ENCODE measurements at regions of chr1 and their contacts with region 1.

Region 1: GRCh38 chr1:221663321-221663720 is 78.6 kb downstream of the DUSP10 start:
- DNase-seq: no peak
- ATAC-seq: no peak
- H3K4me3 ChIP-seq: no peak overlapping the region
- H3K27ac ChIP-seq: no peak overlapping the region
- H3K4me1 ChIP-seq: no peaks in the 10 kb centered on the region
- H3K27me3 ChIP-seq: no peaks in the 10 kb centered on the region
- CTCF ChIP-seq: no peak

Region 2: DNA sequence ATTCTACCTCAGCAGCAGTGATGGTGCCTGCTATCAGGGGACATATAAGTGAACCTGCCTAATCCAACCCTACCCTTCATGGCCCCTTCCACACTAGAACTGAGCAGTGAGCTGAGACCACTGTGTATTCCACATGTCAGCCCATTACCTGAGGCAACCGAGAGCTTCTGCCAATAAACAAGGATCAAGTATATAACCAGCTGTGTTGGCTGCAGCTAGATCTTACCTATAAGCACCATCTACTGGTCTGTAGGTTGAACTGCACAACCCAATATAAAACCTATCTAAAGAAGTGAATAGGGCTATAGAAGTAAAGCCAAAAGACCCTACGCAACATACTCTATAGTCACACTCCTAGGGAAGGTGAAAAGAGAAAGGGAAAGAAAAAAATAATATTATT is 507.7 kb after region 1 on chr1:
- CTCF ChIA-PET with region 1: interaction called, 13 read pairs
- POLR2A ChIA-PET with region 1: no interaction called
- in situ Hi-C with region 1: no loop called
- intact Hi-C with region 1: no loop called
- DNase-seq: peak; percentile 10
- ATAC-seq: peak; percentile 70
- H3K4me3 ChIP-seq: no peak overlapping the region
- H3K27ac ChIP-seq: no peak overlapping the region
- H3K4me1 ChIP-seq: no peaks in the 10 kb centered on the region
- H3K27me3 ChIP-seq: no peaks in the 10 kb centered on the region
- CTCF ChIP-seq: peak; percentile 62

Region 3: DNA sequence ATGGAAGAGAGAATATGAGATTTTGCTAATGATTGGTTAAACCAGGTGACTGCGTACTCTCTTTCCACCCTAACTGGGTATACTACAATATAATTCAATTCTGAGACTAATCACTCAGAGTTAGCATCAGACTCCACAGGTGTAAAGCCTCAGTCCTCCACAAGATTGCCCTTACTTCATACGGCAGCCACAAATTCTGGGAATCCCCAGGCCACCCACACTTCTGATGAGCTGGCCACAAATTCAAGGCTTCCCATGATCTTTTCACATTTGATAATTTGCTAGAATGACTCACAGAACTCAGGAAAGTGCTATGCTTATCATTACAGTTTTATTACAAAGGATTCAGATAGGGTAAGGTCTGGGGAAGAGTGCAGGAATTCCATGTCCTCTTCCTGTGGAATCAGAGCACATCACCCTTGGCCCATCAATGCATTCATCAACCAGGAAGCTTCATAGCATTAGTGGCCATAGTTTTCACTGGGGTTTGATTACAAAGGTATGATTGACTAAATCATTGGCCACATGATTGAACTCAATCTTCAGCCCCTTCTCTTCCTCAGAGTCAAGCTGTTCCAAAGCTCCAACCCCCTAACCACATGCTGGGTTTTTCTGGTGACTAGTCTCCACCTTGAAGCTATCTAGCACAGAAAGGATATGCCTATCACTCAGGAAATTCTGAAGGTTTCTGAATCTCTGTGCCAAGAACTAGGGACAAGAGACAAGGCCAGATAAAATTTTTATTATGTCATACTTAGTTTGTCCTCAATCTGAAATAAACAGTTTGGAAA is 752.9 kb after region 1 on chr1:
- CTCF ChIA-PET with region 1: interaction called, 10 read pairs
- POLR2A ChIA-PET with region 1: no interaction called
- in situ Hi-C with region 1: no loop called
- intact Hi-C with region 1: no loop called
- DNase-seq: no peak
- ATAC-seq: no peak
- H3K4me3 ChIP-seq: no peak overlapping the region
- H3K27ac ChIP-seq: no peak overlapping the region
- H3K4me1 ChIP-seq: no peaks in the 10 kb centered on the region
- H3K27me3 ChIP-seq: peaks cover 4% of the 10 kb centered on the region; the same call in 1 of the 2 replicates
- CTCF ChIP-seq: no peak